ENCODE measurements at regions of chr3 and their contacts with region 1.

Region 1: DNA sequence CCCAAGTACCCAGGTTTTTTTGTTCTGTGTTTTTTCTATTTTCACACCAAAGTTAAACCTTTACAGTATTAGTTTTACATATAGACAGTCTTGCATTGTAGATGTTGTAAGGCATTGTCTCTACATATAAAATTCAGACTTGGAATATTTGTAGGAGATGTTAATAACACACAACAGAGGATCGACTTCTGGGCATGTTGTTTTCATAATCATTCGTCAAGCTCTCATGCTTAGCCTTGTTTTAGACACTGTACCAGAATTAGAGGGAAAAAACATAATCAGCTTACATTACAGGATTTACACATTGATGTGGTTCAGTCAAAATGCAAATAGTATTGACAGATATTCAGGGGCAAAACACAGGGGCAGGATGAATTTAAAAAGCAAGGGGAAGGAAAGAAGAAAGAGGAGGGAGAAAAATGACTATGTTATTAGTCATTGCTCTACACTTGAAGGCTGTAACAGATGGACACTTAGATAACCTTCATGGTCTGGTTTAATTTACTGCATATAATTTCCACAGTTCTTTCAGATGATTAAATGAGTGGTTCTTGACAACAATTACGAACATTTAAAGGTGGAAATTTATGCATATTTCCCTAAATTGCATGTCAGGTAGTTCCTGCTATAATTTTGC is 7.5 kb downstream of the CMSS1 start:
- DNase-seq: no peak
- H3K4me3 ChIP-seq: no peak overlapping the region
- H3K27ac ChIP-seq: no peak overlapping the region
- H3K4me1 ChIP-seq: peaks cover 0 to 24% (median 15%) of the 10 kb centered on the region in 4 donors
- H3K27me3 ChIP-seq: no peaks in the 10 kb centered on the region
- CTCF ChIP-seq: no peak
- EP300 ChIP-seq: no peak
- POLR2A ChIP-seq: no peak

Region 2: GRCh38 chr3:100002599-100003350 is 177.7 kb after region 1 on chr3:
- intact Hi-C with region 1: no loop called
- DNase-seq: peak; percentile 27 to 87
- H3K4me3 ChIP-seq: no peak overlapping the region
- H3K27ac ChIP-seq: peak overlapping the region; percentile 7 to 60 (median 38)
- H3K4me1 ChIP-seq: peaks cover 20 to 58% (median 41%) of the 10 kb centered on the region in 4 donors
- H3K27me3 ChIP-seq: no peaks in the 10 kb centered on the region
- CTCF ChIP-seq: no peak
- EP300 ChIP-seq: no peak
- POLR2A ChIP-seq: no peak

Region 3: GRCh38 chr3:100260685-100261484 is 435.8 kb after region 1 on chr3 and contains the start of gene TBC1D23:
- intact Hi-C with region 1: loop called (anchors 5 kb)
- DNase-seq: peak; percentile 97 to 100
- H3K4me3 ChIP-seq: peak within 1 kb of the TSS; percentile 83 to 94 (median 90)
- H3K27ac ChIP-seq: peak within 1 kb of the TSS; percentile 95 to 98 (median 97)
- H3K4me1 ChIP-seq: peaks cover 13 to 58% (median 43%) of the 10 kb centered on the region in 4 donors
- H3K27me3 ChIP-seq: no peaks in the 10 kb centered on the region
- CTCF ChIP-seq: peak in 1 of 7 experiments; percentile 3
- EP300 ChIP-seq: no peak
- POLR2A ChIP-seq: peak in 2 of 4 donors; percentile 46 to 91
- total RNA-seq, gene TBC1D23: 7.0 to 79.5 (median 61.4) TPM